ENCODE measurements at regions of chr19 and their contacts with region 1.

Region 1: DNA sequence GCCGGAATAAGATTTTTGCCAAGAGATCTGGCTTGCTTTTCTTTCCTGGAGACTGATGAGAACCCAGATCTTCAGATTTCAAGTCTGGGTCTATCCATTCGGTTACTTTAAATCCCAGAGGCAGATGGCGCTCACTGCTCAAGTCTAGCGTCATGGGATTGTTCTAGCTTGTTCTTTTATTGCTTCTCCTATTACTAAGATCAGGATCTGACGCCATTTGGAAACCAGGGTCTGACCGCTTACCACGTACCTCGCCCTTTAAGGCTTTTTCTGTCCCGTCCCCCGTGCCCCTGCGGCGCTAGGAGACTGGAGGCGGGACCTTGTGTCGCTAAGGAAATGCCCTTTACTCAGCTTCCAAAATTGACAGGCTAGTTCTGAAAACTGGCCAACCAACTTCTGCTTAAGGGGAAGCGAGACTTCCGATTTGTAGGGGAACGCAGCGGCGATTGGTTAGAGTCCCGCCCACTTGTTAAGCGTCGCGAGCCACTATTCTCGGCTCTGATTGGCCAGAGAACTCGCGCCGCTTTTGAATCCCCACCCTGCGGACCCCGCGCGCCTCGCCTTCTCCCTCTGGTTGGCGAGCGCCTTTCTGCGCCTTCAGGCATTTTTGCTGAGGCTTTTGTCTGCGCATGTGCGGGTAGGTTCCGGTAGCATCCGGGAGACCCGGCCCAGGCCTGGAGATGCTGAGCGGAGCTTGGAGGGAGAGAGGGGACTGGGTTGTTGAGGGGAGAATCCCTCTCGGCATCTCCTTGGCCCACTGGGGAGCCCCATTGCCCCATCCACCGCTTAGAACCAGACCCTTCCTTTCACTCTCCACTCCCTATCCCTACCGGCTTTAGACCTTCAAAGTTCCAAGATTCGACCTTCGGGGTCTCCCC is 3.8 kb upstream of the C19orf84 start:
- DNase-seq: peak; percentile 99
- ATAC-seq: peak; percentile 88
- H3K4me3 Mint-ChIP-seq: peak overlapping the region; percentile 91
- H3K27ac Mint-ChIP-seq: peak overlapping the region; percentile 96
- H3K4me1 Mint-ChIP-seq: peaks cover 44% of the 10 kb centered on the region
- H3K27me3 Mint-ChIP-seq: no peaks in the 10 kb centered on the region

Region 2: DNA sequence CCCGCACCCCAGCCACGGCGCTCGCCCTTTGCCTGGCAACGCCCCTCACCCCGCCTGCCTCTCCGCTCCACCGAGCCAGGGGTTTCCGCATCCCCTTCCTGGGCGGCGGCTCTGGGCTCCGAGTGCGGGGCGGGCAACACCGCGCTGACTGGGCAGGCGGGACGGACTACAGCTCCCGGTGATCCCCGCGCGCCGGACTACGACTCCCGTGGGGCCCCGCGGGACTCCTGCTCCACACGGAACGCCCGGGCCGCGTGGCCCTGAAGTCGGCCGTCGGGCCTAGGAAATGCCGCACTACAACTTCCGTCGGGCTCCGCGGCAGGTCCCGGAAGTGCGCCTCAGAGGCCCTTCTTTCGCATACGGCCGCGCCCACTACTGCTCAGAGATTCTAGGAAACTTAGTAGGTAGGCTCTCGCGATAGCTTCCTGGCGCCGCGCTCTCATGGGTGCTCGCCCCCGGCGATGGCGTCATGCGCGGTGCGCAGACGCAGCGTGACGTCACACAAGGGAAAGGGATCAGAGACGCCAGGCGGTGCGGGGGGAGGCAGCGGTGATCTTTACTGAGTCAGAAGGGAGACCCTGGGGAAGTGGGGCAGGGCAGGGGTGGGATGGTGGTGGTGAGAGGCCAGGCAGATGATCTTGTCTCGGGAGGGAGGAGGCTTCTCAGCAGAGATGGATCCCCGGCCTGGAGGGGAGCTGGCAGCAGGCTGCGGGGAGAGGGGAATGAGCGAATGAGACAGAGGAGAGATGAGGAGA is 883.0 kb before region 1 on chr19 and contains the start of gene JOSD2:
- CTCF ChIA-PET with region 1: no interaction called
- POLR2A ChIA-PET with region 1: no interaction called
- intact Hi-C with region 1: loop called in 1 of 2 experiments (anchors 1 kb)
- DNase-seq: peak; percentile 99
- ATAC-seq: peak; percentile 97
- H3K4me3 Mint-ChIP-seq: peak within 1 kb of the TSS; percentile 84
- H3K27ac Mint-ChIP-seq: peak within 1 kb of the TSS; percentile 92
- H3K4me1 Mint-ChIP-seq: peaks cover 14% of the 10 kb centered on the region
- H3K27me3 Mint-ChIP-seq: peaks cover 5% of the 10 kb centered on the region
- total RNA-seq, gene JOSD2: 17.4 to 28.1 TPM

Region 3: DNA sequence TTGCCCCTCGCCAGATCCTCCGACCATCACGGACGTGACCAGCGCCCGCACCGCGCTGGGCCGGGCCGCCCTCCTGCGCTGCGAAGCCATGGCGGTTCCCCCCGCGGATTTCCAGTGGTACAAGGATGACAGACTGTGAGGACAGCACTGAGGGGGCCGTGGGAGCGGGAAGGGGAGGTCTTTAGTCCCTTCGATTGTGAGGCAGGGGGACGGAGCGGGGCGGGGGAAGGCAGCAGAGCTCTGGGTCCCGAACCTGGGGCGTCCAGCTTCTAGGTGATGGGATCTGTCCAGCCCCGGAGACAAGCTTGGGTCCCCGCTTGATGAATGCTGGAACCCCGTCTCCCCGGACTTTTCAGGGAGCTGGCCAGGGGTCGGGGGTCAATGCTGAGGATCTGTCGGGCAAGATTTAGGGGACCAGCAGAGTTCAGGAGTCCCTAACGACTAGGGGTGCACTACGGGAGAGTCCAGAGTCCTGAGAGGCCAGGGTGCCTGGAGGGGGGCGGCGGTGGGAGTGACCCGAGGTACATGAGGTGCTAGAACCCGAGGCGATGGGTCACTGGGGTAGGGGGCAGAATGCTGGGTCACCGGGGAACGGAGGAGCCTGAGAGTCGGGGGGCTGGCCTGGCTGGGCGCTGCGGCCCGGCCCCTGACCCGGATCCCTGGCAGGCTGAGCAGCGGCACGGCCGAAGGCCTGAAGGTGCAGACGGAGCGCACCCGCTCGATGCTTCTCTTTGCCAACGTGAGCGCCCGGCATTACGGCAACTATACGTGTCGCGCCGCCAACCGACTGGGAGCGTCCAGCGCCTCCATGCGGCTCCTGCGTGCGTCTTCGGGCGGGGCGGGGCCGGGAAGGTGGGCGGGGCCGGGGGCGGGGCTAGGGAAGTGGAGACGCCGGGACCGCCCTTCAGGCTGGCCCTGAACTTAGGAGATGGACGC is 66.9 kb before region 1 on chr19:
- CTCF ChIA-PET with region 1: no interaction called
- POLR2A ChIA-PET with region 1: no interaction called
- intact Hi-C with region 1: loop called in 1 of 2 experiments (anchors 1 kb)
- DNase-seq: peak; percentile 87
- ATAC-seq: peak; percentile 93
- H3K4me3 Mint-ChIP-seq: peak overlapping the region; percentile 35
- H3K27ac Mint-ChIP-seq: no peak overlapping the region
- H3K4me1 Mint-ChIP-seq: peaks cover 8% of the 10 kb centered on the region
- H3K27me3 Mint-ChIP-seq: peaks cover 60% of the 10 kb centered on the region

Region 4: GRCh38 chr19:51422053-51422448 is 27.9 kb after region 1 on chr19:
- CTCF ChIA-PET with region 1: interaction called, 16 read pairs
- POLR2A ChIA-PET with region 1: no interaction called
- intact Hi-C with region 1: loop called in 1 of 2 experiments (anchors 2 kb)
- DNase-seq: peak; percentile 94
- ATAC-seq: peak; percentile 60
- H3K4me3 Mint-ChIP-seq: no peak overlapping the region
- H3K27ac Mint-ChIP-seq: no peak overlapping the region
- H3K4me1 Mint-ChIP-seq: peaks cover 24% of the 10 kb centered on the region
- H3K27me3 Mint-ChIP-seq: peaks cover 20% of the 10 kb centered on the region

Region 5: GRCh38 chr19:51552996-51553725 is 159.0 kb after region 1 on chr19:
- CTCF ChIA-PET with region 1: no interaction called
- POLR2A ChIA-PET with region 1: no interaction called
- intact Hi-C with region 1: no loop called
- DNase-seq: peak; percentile 76
- ATAC-seq: peak; percentile 33
- H3K4me3 Mint-ChIP-seq: no peak overlapping the region
- H3K27ac Mint-ChIP-seq: no peak overlapping the region
- H3K4me1 Mint-ChIP-seq: peaks cover 18% of the 10 kb centered on the region
- H3K27me3 Mint-ChIP-seq: peaks cover 38% of the 10 kb centered on the region

Region 6: GRCh38 chr19:51593969-51594773 is 200.0 kb after region 1 on chr19:
- CTCF ChIA-PET with region 1: no interaction called
- POLR2A ChIA-PET with region 1: no interaction called
- intact Hi-C with region 1: loop called (anchors 1 to 2 kb)
- DNase-seq: peak; percentile 99
- ATAC-seq: peak; percentile 100
- H3K4me3 Mint-ChIP-seq: peak overlapping the region; percentile 84
- H3K27ac Mint-ChIP-seq: peak overlapping the region; percentile 81
- H3K4me1 Mint-ChIP-seq: peaks cover 18% of the 10 kb centered on the region
- H3K27me3 Mint-ChIP-seq: peaks cover 5% of the 10 kb centered on the region

Region 7: GRCh38 chr19:51784922-51785690 is 390.9 kb after region 1 on chr19:
- CTCF ChIA-PET with region 1: no interaction called
- POLR2A ChIA-PET with region 1: no interaction called
- intact Hi-C with region 1: loop called in 1 of 2 experiments (anchors 1 kb)
- DNase-seq: peak; percentile 87
- ATAC-seq: peak; percentile 97
- H3K4me3 Mint-ChIP-seq: no peak overlapping the region
- H3K27ac Mint-ChIP-seq: no peak overlapping the region
- H3K4me1 Mint-ChIP-seq: peaks cover 4% of the 10 kb centered on the region
- H3K27me3 Mint-ChIP-seq: peaks cover 16% of the 10 kb centered on the region